ENCODE measurements at regions of chr3 and their contacts with region 1.

Region 1: GRCh38 chr3:64278625-64279024 is 53.4 kb upstream of the PRICKLE2 start:
- DNase-seq: peak; percentile 50
- ATAC-seq: no peak; the same call in 1 of the 2 replicates
- H3K4me3 ChIP-seq: no peak overlapping the region
- H3K27ac ChIP-seq: no peak overlapping the region
- H3K4me1 ChIP-seq: no peaks in the 10 kb centered on the region
- H3K27me3 ChIP-seq: no peaks in the 10 kb centered on the region
- CTCF ChIP-seq: no peak
- POLR2A ChIP-seq: no peak
- RAD21 ChIP-seq: no peak

Region 2: DNA sequence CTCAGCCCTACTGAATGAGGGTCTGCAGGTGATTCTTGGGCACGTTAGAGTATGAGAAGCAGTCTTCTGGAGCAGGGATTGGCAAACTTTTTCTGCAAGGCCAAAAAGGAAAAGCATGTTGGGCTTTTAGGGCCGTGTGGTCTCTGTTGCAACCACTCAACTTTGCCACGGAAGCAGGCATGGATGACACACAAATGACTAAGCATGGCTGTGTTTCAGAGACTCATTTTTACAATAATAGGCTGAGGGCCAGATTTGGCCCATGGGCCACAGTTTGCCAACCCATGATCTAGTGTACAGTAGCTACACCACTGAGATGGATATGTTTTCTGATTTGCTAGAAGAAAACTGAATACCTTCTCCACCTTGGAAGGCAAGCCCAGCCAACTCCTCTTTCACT is 12.7 kb after region 1 on chr3:
- CTCF ChIA-PET with region 1: no interaction called
- POLR2A ChIA-PET with region 1: no interaction called
- dilution Hi-C with region 1: no loop called
- in situ Hi-C with region 1: no loop called
- intact Hi-C with region 1: loop called (anchors 2 kb)
- DNase-seq: peak; percentile 93
- ATAC-seq: peak; percentile 67
- H3K4me3 ChIP-seq: no peak overlapping the region
- H3K27ac ChIP-seq: peak overlapping the region; percentile 57
- H3K4me1 ChIP-seq: peaks cover 9% of the 10 kb centered on the region
- H3K27me3 ChIP-seq: no peaks in the 10 kb centered on the region
- CTCF ChIP-seq: no peak
- POLR2A ChIP-seq: no peak
- RAD21 ChIP-seq: no peak

Region 3: DNA sequence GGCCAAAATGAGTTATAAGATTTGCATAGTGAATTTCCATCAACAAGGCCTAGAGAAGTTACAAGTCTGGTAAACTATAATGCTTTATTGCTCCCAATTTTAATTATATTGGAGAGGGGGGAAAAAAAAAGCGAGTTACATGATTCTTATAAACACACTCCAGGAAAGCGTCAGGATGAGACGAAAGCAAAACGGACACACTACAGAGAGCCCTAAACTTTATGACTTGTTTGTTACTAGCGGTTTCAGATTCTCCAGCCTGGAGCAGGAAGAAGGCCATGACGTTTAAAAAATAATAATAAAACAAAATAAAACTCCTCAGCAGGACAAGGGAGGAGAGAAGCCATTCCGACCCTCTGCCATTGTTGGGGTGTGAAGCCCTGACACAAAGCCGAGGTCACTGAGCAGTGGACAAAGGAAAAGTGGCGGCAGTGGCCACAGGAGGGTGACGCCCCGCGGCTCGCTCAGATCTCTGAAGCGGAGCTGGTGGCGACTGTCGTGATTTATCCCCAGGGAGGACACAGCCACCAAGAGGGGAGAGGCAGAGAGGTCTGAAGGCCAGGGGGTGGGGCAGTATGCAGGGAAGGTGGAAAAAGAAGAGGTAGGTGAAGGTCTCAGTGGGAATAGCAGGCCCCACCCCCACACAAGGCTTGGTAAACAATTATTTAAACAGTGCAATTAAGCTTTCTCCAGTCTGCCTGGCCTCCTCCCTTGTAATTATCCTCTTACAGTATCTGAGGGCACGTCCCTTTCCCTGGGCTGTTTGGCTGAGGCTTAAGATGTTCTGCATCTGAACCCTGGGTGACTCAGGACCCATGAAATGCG is 363.9 kb after region 1 on chr3:
- CTCF ChIA-PET with region 1: no interaction called
- POLR2A ChIA-PET with region 1: no interaction called
- dilution Hi-C with region 1: no loop called
- in situ Hi-C with region 1: no loop called
- intact Hi-C with region 1: no loop called
- DNase-seq: no peak
- ATAC-seq: no peak
- H3K4me3 ChIP-seq: no peak overlapping the region
- H3K27ac ChIP-seq: no peak overlapping the region
- H3K4me1 ChIP-seq: peaks cover 2% of the 10 kb centered on the region; the same call in 1 of the 2 replicates
- H3K27me3 ChIP-seq: no peaks in the 10 kb centered on the region
- CTCF ChIP-seq: no peak
- POLR2A ChIP-seq: no peak
- RAD21 ChIP-seq: no peak

Measured in IMR-90 (cell line).